Activated B cell treated with CpG ODN at 0.5 μM for 24 hours (primary cell): ENCODE measurements at regions of chr22 and their contacts with region 1.

Region 1: GRCh38 chr22:24106385-24107381 is 74.6 kb upstream of the SUSD2 start:
- DNase-seq: peak; percentile 23
- ATAC-seq: peak; percentile 78
- H3K4me3 Mint-ChIP-seq: no peak overlapping the region
- H3K27ac Mint-ChIP-seq: no peak overlapping the region
- H3K4me1 Mint-ChIP-seq: no peaks in the 10 kb centered on the region
- H3K27me3 Mint-ChIP-seq: no peaks in the 10 kb centered on the region
- CTCF ChIP-seq: no peak

Region 2: GRCh38 chr22:23913661-23914353 is 192.9 kb before region 1 on chr22:
- CTCF ChIA-PET with region 1: no interaction called
- POLR2A ChIA-PET with region 1: no interaction called
- intact Hi-C with region 1: no loop called
- DNase-seq: peak; percentile 97
- ATAC-seq: peak; percentile 99
- H3K4me3 Mint-ChIP-seq: peak overlapping the region; percentile 96
- H3K27ac Mint-ChIP-seq: peak overlapping the region; percentile 96
- H3K4me1 Mint-ChIP-seq: peaks cover 29% of the 10 kb centered on the region
- H3K27me3 Mint-ChIP-seq: no peaks in the 10 kb centered on the region
- CTCF ChIP-seq: no peak

Region 3: DNA sequence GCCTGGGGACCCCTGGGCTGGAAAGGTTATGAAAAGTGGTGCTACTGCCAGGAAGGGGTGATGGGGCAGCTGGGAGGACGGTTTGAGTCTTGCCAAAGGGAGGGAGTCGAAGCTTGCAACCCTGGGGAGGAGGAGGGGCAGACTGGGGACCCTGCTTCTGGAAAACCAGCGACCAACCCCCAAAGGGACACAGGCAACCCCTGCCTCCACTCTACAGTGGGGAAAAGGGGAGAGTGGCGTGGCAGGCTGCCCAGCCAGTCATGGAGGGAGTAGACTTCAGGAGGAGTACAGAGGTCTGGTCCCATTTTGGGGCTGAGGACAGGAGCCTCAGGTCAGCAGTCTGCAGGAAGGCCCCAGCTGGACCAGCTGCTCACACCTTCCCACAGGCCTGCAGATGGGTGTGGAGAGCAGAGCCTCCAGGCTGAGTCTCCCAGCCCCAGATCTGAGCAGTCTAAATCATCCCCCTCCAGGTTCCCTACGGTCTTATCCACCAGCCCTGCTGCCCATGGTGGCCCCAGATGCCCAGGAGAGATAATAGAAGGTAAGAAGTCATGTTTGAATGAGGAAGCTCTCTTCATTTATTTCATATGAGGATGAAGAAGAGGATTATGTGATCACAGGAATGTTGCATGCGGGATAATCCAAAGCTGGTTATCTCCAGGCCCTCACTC is 135.7 kb before region 1 on chr22:
- CTCF ChIA-PET with region 1: no interaction called
- POLR2A ChIA-PET with region 1: no interaction called
- intact Hi-C with region 1: no loop called
- DNase-seq: no peak
- ATAC-seq: no peak
- H3K4me3 Mint-ChIP-seq: no peak overlapping the region
- H3K27ac Mint-ChIP-seq: no peak overlapping the region
- H3K4me1 Mint-ChIP-seq: peaks cover 19% of the 10 kb centered on the region
- H3K27me3 Mint-ChIP-seq: no peaks in the 10 kb centered on the region
- CTCF ChIP-seq: no peak

Region 4: GRCh38 chr22:24086310-24086709 is 20.4 kb before region 1 on chr22:
- CTCF ChIA-PET with region 1: no interaction called
- POLR2A ChIA-PET with region 1: no interaction called
- intact Hi-C with region 1: no loop called
- DNase-seq: no peak
- ATAC-seq: no peak
- H3K4me3 Mint-ChIP-seq: no peak overlapping the region
- H3K27ac Mint-ChIP-seq: no peak overlapping the region
- H3K4me1 Mint-ChIP-seq: no peaks in the 10 kb centered on the region
- H3K27me3 Mint-ChIP-seq: no peaks in the 10 kb centered on the region
- CTCF ChIP-seq: no peak

Region 5: GRCh38 chr22:24230911-24231656 is 124.4 kb after region 1 on chr22:
- CTCF ChIA-PET with region 1: no interaction called
- POLR2A ChIA-PET with region 1: no interaction called
- intact Hi-C with region 1: loop called (anchors 2 kb)
- DNase-seq: peak; percentile 61
- ATAC-seq: peak; percentile 84
- H3K4me3 Mint-ChIP-seq: no peak overlapping the region
- H3K27ac Mint-ChIP-seq: no peak overlapping the region
- H3K4me1 Mint-ChIP-seq: no peaks in the 10 kb centered on the region
- H3K27me3 Mint-ChIP-seq: no peaks in the 10 kb centered on the region
- CTCF ChIP-seq: no peak